Activated naive CD4-positive, alpha-beta T cell treated with anti-CD3 and anti-CD28 coated beads for 36 hours (primary cell): ENCODE measurements at regions of chr11 and their contacts with region 1.

Region 1: DNA sequence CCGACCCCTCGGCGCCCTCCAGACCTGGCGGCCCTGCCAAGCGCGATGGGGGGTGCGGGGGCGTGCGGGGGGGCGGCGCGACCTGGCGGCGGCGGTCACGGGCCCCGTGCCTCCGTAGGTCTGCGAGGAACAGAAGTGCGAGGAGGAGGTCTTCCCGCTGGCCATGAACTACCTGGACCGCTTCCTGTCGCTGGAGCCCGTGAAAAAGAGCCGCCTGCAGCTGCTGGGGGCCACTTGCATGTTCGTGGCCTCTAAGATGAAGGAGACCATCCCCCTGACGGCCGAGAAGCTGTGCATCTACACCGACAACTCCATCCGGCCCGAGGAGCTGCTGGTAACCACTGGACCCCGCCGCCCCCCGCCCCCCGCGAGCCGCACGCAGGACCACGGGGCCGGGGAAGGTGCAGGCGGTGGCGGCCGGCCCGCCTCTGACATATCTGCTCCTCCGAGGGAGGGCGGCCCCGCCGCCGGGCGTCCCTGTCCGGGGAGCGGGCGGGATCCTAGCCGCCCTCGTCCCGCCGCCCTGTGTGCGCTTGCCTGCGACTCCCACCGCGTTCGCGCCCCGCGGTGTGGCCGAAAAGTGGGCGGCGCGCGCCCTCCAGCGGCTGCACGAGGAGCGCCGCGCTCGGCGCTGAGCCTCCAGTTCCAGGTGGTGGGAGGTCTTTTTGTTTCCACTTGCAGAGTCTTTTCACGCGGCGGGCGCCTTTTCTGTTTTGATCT is 2.1 kb downstream of the CCND1 start:
- DNase-seq: peak; percentile 71
- H3K4me3 Mint-ChIP-seq: peak overlapping the region; percentile 52
- H3K27ac Mint-ChIP-seq: no peak overlapping the region
- H3K4me1 Mint-ChIP-seq: peaks cover 27% of the 10 kb centered on the region
- H3K27me3 Mint-ChIP-seq: peaks cover 20% of the 10 kb centered on the region

Region 2: GRCh38 chr11:69443138-69443967 is 199.7 kb before region 1 on chr11:
- CTCF ChIA-PET with region 1: interaction called, 4 read pairs
- intact Hi-C with region 1: loop called (anchors 2 kb)
- DNase-seq: peak; percentile 76
- H3K4me3 Mint-ChIP-seq: peak overlapping the region; percentile 53
- H3K27ac Mint-ChIP-seq: no peak overlapping the region
- H3K4me1 Mint-ChIP-seq: peaks cover 11% of the 10 kb centered on the region
- H3K27me3 Mint-ChIP-seq: peaks cover 7% of the 10 kb centered on the region

Region 3: DNA sequence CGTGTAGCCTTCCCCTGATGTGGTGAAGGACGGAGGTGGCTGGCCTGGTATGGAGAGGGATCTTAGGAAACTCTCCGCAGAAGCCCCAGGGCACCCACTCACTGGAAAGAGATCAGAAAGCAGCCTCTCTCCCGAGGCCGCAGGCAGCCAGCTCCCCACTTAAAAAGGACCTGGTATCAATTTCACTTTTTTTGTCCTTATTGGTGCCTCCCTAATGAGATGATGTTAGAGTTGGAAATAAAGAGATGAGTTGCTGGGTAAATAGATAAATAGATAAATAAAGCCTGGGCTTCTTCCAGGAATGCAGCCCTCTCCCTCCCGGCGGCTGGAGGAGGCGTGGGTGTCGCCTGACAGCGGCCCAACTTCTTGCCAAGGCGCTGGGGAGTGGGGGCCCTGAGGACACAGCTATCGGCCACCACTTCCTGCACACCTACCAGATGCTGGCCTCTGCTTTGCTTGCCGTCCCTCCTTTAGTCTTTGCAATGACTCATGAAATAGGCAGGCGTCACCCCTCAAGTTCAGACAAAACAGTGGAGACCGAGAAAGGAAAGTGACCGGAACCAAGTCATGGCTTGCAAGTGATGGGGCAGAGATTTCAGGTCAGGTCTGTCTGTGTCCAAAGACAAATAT is 118.7 kb before region 1 on chr11:
- CTCF ChIA-PET with region 1: no interaction called
- intact Hi-C with region 1: no loop called
- DNase-seq: no peak
- H3K4me3 Mint-ChIP-seq: no peak overlapping the region
- H3K27ac Mint-ChIP-seq: no peak overlapping the region
- H3K4me1 Mint-ChIP-seq: no peaks in the 10 kb centered on the region
- H3K27me3 Mint-ChIP-seq: peaks cover 2% of the 10 kb centered on the region

Region 4: GRCh38 chr11:69615565-69616251 is 27.4 kb before region 1 on chr11:
- CTCF ChIA-PET with region 1: no interaction called
- intact Hi-C with region 1: no loop called
- DNase-seq: no peak
- H3K4me3 Mint-ChIP-seq: no peak overlapping the region
- H3K27ac Mint-ChIP-seq: no peak overlapping the region
- H3K4me1 Mint-ChIP-seq: no peaks in the 10 kb centered on the region
- H3K27me3 Mint-ChIP-seq: peaks cover 2% of the 10 kb centered on the region

Region 5: DNA sequence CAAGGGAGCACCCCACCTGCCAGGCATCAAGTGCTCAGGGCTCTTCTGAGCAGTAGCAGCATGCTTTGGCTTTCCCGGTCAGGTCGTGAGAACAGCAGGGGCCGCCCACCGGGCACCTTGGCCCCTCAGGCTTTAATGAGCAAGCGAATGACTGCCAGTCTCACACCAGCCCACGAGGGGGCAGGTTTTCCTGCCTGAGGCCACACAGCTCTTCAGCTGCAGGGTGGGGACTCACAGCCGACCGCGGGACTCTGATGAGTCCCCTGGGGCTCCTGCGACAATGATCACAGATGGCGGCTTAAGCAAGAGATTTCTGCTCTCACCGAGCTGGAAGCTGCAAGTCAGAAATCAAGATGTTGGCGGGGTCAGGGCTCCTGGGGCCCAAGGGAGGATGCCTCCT is 75.1 kb after region 1 on chr11:
- CTCF ChIA-PET with region 1: no interaction called
- intact Hi-C with region 1: no loop called
- DNase-seq: peak; percentile 27
- H3K4me3 Mint-ChIP-seq: no peak overlapping the region
- H3K27ac Mint-ChIP-seq: no peak overlapping the region
- H3K4me1 Mint-ChIP-seq: no peaks in the 10 kb centered on the region
- H3K27me3 Mint-ChIP-seq: peaks cover 38% of the 10 kb centered on the region

Region 6: DNA sequence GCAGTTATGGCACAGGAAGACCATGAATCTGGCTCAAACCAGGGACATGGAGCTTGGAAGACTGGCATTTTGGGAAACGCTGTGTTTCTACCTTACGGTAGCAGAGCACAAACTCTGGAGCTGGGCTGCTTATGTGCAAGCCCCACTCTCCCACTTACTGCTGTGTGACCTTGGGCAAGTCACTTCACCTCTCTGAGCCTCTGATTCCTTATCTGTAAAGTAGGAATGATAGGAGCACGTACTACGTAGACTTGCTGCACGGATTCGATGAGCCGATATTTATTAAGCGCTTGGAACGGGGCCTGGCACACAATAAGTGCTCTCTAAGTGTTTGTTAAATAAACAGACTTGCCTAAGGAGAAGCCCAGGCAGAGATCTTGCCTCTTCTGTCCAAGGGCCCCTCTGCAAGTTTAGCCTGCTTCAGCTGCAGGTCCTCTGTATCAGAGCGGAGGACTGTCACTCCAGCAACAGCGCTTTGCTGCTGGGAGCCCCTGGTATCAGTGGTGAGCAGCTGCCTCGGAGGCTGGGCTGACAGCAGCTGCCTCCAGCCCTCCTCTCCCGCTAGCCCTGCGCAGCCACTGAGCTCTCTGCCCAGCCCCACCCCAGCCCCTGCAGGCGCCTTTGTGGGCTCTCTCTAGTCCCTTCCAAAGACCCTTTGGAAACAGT is 338.2 kb after region 1 on chr11:
- CTCF ChIA-PET with region 1: no interaction called
- intact Hi-C with region 1: no loop called
- DNase-seq: no peak
- H3K4me3 Mint-ChIP-seq: no peak overlapping the region
- H3K27ac Mint-ChIP-seq: no peak overlapping the region
- H3K4me1 Mint-ChIP-seq: no peaks in the 10 kb centered on the region
- H3K27me3 Mint-ChIP-seq: peaks cover 33% of the 10 kb centered on the region